ENCODE measurements at regions of chr22 and their contacts with region 1.

Region 1: GRCh38 chr22:46613606-46614021 is 6.6 kb upstream of the GRAMD4 start:
- DNase-seq: peak; percentile 64
- H3K4me3 Mint-ChIP-seq: peak overlapping the region; percentile 85
- H3K27ac Mint-ChIP-seq: peak overlapping the region; percentile 91
- H3K4me1 Mint-ChIP-seq: peaks cover 26% of the 10 kb centered on the region
- H3K27me3 Mint-ChIP-seq: no peaks in the 10 kb centered on the region

Region 2: GRCh38 chr22:46563381-46564083 is 50.1 kb before region 1 on chr22:
- CTCF ChIA-PET with region 1: no interaction called
- intact Hi-C with region 1: loop called (anchors 5 kb)
- DNase-seq: peak; percentile 88
- H3K4me3 Mint-ChIP-seq: peak overlapping the region; percentile 13
- H3K27ac Mint-ChIP-seq: no peak overlapping the region
- H3K4me1 Mint-ChIP-seq: peaks cover 7% of the 10 kb centered on the region
- H3K27me3 Mint-ChIP-seq: no peaks in the 10 kb centered on the region

Region 3: DNA sequence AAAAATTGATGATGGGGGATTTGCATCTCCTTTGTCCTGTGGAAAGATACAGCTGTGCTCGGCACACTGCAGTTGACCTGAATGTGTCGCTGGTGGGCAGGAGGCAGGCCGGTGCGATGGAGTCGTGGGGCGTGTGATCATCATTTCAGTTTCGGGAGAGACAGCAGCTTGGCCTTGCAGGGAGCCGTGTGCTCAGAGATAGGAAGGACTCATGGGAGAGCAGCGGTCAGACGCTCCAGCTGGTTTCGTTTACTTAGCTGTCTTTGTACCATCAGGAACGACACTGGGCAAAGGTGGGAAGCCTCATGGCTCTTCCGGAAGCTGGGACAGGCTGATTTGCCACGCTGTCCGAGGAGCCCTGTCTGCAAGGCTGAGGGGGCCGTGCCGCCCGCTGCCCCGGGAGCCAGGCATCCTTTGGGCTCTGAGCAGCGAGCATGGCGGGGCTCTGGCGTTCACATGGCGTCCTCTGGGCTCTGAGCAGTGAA is 39.3 kb after region 1 on chr22:
- CTCF ChIA-PET with region 1: no interaction called
- intact Hi-C with region 1: loop called (anchors 1 kb)
- DNase-seq: no peak
- H3K4me3 Mint-ChIP-seq: no peak overlapping the region
- H3K27ac Mint-ChIP-seq: peak overlapping the region; percentile 4
- H3K4me1 Mint-ChIP-seq: peaks cover 24% of the 10 kb centered on the region
- H3K27me3 Mint-ChIP-seq: no peaks in the 10 kb centered on the region

Region 4: GRCh38 chr22:46737976-46738646 is 124.5 kb after region 1 on chr22 and contains the start of gene CERK:
- CTCF ChIA-PET with region 1: no interaction called
- intact Hi-C with region 1: loop called (anchors 5 kb)
- DNase-seq: peak; percentile 72
- H3K4me3 Mint-ChIP-seq: peak within 1 kb of the TSS; percentile 100
- H3K27ac Mint-ChIP-seq: peak within 1 kb of the TSS; percentile 99
- H3K4me1 Mint-ChIP-seq: peaks cover 40% of the 10 kb centered on the region
- H3K27me3 Mint-ChIP-seq: no peaks in the 10 kb centered on the region
- total RNA-seq, gene CERK: 32.6 to 34.9 TPM

Region 5: DNA sequence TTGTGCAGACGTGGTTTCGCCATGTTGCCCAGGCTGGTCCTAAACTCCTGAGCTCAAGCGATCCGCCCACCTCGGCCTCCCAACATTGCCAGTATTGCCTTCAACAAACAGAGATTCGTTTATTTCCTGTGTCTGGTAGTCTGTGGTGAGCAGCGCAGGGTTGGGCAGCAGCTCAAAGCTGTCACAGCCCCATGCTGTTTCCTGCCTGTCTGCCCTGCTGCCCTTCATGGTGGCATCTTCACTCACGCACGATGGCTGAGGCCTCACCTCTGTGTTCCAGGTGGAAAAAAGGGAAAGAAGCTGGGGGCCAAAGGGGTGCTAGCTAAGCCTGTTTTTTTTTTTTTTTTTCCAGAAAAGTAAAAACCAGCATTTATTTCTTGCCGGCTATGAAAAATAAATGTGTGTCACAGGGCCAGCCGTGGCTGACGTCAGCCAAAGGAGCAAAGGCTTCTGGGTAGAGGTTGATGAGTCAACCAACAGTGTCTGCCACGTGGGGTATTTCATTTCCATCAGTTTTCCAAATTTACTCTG is 177.7 kb after region 1 on chr22:
- CTCF ChIA-PET with region 1: no interaction called
- intact Hi-C with region 1: loop called (anchors 2 kb)
- DNase-seq: peak; percentile 89
- H3K4me3 Mint-ChIP-seq: peak overlapping the region; percentile 84
- H3K27ac Mint-ChIP-seq: peak overlapping the region; percentile 99
- H3K4me1 Mint-ChIP-seq: peaks cover 40% of the 10 kb centered on the region
- H3K27me3 Mint-ChIP-seq: no peaks in the 10 kb centered on the region

Measured in activated naive CD4-positive, alpha-beta T cell treated with anti-CD3 and anti-CD28 coated beads for 36 hours (primary cell).